Mammary epithelial cell (primary cell): ENCODE measurements at regions of chr15 and their contacts with region 1.

Region 1: GRCh38 chr15:40928821-40929659 is at the start of gene DLL4:
- DNase-seq: peak; percentile 62
- H3K4me3 ChIP-seq: peak within 1 kb of the TSS; percentile 40 to 44 (median 42)
- H3K27ac ChIP-seq: no peak within 1 kb of the TSS
- H3K4me1 ChIP-seq: peaks cover 35% of the 10 kb centered on the region
- H3K27me3 ChIP-seq: peaks cover 30% of the 10 kb centered on the region
- CTCF ChIP-seq: no peak
- total RNA-seq, gene DLL4: under 0.01 TPM in 1 of 2 donors, not detected in the other

Region 2: GRCh38 chr15:40893733-40894688 is 35.0 kb before region 1 on chr15 and contains the start of gene VPS18:
- CTCF ChIA-PET with region 1: no interaction called
- dilution Hi-C with region 1: no loop called
- in situ Hi-C with region 1: no loop called
- intact Hi-C with region 1: no loop called
- DNase-seq: peak; percentile 97
- H3K4me3 ChIP-seq: peak within 1 kb of the TSS; percentile 79 to 90 (median 88)
- H3K27ac ChIP-seq: peak within 1 kb of the TSS; percentile 91
- H3K4me1 ChIP-seq: peaks cover 18% of the 10 kb centered on the region
- H3K27me3 ChIP-seq: no peaks in the 10 kb centered on the region
- CTCF ChIP-seq: peak; percentile 78 to 88
- total RNA-seq, gene VPS18: 21.5 to 56.0 TPM

Region 3: DNA sequence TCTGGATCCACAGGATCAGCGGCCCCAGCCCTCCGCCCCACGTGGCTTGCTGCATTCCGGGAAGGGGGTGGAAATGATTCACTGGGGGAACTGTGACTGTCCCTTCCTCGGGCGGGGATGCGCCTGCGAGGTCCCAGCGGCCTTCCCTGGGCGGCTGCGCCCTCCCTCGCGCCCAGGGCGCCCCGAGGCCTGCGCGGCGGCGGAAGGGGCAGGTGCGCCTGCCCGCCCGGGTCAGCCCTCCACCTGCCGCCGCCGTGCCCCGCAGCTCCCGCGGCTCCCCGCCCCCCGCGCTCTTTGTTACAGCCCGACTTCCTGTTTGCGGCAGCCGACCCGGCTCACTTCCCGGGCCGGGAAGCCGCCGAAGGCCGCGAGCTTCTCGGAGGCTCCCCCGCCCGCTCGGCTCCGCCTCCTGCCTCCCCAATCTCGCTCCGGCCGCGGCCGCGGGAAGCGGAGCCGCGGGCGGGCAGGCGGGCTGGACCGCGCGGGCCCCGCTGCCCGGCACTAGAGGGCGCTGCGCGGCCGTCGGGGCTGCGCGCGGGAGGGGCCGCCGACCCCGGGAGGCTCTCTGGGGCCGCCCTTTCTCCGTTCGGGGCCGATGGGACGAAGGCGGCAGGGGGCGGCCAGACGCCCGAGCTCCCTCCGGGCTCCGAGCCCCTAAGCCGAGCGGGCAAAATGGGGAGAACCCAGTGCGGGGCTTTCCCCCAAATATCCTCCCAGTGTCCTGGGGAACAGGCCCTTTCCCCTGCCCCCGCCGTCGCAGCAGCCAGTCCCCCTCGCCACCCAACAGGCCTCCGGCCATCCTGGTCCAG is 12.7 kb after region 1 on chr15:
- CTCF ChIA-PET with region 1: interaction called, 20 read pairs
- dilution Hi-C with region 1: no loop called
- in situ Hi-C with region 1: no loop called
- intact Hi-C with region 1: no loop called
- DNase-seq: peak; percentile 65
- H3K4me3 ChIP-seq: peak overlapping the region; percentile 37 to 49 (median 46)
- H3K27ac ChIP-seq: no peak overlapping the region
- H3K4me1 ChIP-seq: peaks cover 12% of the 10 kb centered on the region
- H3K27me3 ChIP-seq: no peaks in the 10 kb centered on the region
- CTCF ChIP-seq: peak; percentile 38 to 46

Region 4: GRCh38 chr15:40952901-40953712 is 24.1 kb after region 1 on chr15 and contains the start of gene CHAC1:
- CTCF ChIA-PET with region 1: no interaction called
- dilution Hi-C with region 1: no loop called
- in situ Hi-C with region 1: no loop called
- intact Hi-C with region 1: loop called (anchors 2 kb)
- DNase-seq: peak; percentile 95
- H3K4me3 ChIP-seq: peak within 1 kb of the TSS; percentile 81 to 93 (median 87)
- H3K27ac ChIP-seq: peak within 1 kb of the TSS; percentile 85
- H3K4me1 ChIP-seq: peaks cover 14% of the 10 kb centered on the region
- H3K27me3 ChIP-seq: no peaks in the 10 kb centered on the region
- CTCF ChIP-seq: peak in 1 of 2 donors; percentile 6
- total RNA-seq, gene CHAC1: 72.4 to 127 TPM

Region 5: DNA sequence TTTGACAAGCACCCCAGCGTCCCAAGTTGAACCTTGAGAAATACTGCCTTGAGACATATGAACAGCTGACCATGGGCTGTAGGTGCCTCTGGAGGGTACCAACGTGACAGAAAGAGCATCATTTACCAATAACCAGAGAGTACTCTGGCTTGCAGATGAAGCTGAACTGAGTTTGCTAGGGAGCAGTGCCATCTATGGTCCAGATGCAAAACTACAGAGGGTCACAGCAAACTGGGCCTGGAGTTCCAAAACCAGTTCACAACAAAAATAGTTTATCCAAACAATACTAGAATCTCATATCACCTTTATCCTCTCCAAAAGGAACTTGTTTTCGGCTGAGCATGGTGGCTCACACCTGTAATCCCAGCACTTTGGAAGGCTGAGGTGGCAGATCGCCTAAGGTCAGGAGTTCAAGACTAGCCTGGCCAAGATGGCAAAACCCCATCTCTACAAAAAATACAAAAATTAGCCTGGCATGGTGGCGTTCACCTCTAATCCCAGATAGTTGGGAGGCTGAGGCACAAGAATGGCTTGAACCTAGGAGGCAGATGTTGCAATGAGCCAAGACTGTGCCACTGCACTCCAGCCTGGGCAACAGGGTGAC is 93.5 kb after region 1 on chr15:
- CTCF ChIA-PET with region 1: interaction called, 15 read pairs
- dilution Hi-C with region 1: no loop called
- in situ Hi-C with region 1: no loop called
- intact Hi-C with region 1: no loop called
- DNase-seq: peak; percentile 16
- H3K4me3 ChIP-seq: no peak overlapping the region
- H3K27ac ChIP-seq: no peak overlapping the region
- H3K4me1 ChIP-seq: no peaks in the 10 kb centered on the region
- H3K27me3 ChIP-seq: no peaks in the 10 kb centered on the region
- CTCF ChIP-seq: peak; percentile 61 to 74